Thyroid gland (tissue), 4 donors: ENCODE measurements at regions of chr12 and their contacts with region 1.

Region 1: GRCh38 chr12:123237646-123238329 is 4.6 kb downstream of the MTRFR start:
- DNase-seq: peak; percentile 60 to 74
- H3K4me3 ChIP-seq: no peak overlapping the region
- H3K27ac ChIP-seq: no peak overlapping the region
- H3K4me1 ChIP-seq: peaks cover 15 to 25% of the 10 kb centered on the region in 2 donors
- H3K27me3 ChIP-seq: no peaks in the 10 kb centered on the region
- CTCF ChIP-seq: peak; percentile 33 to 84 (median 75)
- POLR2A ChIP-seq: no peak

Region 2: GRCh38 chr12:122980183-122981046 is 257.4 kb before region 1 on chr12 and contains the start of gene ARL6IP4:
- intact Hi-C with region 1: loop called (anchors 5 kb)
- DNase-seq: peak; percentile 57 to 64
- H3K4me3 ChIP-seq: peak within 1 kb of the TSS; percentile 33 to 98 (median 60)
- H3K27ac ChIP-seq: peak within 1 kb of the TSS; percentile 80 to 84 (median 81)
- H3K4me1 ChIP-seq: peaks cover 31 to 65% of the 10 kb centered on the region in 2 donors
- H3K27me3 ChIP-seq: no peaks in the 10 kb centered on the region
- CTCF ChIP-seq: peak in 1 of 6 experiments; percentile 10
- POLR2A ChIP-seq: peak in 1 of 2 donors; percentile 84
- total RNA-seq, gene ARL6IP4: 210 to 281 (median 262) TPM

Region 3: DNA sequence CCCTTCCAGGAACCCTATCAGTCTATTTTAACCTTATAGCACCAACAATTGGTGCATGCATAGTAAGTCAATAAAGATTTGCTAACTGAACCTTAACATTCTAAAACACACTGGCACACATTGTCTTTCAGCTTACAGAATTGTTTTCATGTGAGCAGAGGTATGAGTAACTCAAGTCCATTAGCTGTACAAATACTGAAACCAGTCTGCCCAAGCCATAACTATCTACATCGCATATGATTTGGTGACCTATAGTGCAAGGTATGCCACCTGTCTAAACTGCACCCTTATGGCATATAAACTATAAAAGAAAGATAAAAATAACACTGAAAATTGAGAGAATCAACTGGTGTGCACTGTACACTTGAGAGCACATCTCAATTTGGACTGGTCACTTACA is 92.0 kb after region 1 on chr12:
- intact Hi-C with region 1: no loop called
- DNase-seq: no peak
- H3K4me3 ChIP-seq: no peak overlapping the region
- H3K27ac ChIP-seq: no peak overlapping the region
- H3K4me1 ChIP-seq: no peaks in the 10 kb centered on the region
- H3K27me3 ChIP-seq: no peaks in the 10 kb centered on the region
- CTCF ChIP-seq: no peak
- POLR2A ChIP-seq: no peak